Naive thymus-derived CD4-positive, alpha-beta T cell (primary cell): ENCODE measurements at regions of chr9 and their contacts with region 1.

Region 1: DNA sequence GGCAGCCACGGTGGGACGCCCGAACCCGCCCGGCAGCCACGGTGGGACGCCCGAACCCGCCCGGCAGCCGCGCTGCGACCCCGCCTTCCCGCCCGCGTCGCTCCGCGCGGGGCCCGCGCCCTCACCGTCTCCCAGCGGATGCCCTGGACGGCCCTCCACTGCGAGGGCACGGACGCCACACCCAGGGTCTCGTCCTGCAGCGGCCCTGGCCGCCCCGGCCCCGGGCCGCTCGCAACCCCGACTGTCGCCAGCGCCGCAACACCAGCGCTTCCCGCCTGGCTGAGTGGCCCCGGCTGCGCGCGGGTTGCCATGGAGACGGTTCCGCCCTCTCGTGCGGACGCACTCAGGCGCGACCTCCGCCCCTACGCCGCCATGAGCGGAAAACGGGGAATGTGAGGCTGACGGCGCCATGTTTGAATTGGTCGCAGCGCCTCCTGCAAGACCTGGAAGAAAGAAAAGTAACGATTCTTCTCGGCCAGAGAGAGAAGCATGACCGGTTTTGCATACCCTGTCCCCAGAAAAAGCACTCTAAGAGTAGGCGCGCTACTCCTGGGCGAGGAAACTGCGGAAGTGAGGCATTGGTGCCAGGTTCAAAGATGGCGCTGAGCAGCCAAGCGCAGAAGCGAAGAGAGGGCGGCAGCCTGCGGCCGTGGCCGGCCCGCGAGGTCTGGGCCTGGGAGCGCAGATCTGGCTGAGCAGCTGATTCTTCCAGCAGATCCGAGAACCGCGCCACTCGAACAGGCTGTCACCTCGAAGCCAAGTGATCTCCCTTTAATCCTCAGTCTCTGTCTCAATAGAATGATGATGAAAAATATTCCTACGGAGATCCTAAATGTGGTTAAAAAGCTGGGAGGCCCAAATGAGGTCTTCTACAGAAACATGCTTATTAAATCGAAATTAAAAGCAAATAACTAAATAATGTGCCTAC is at the start of gene DYNC2I2:
- DNase-seq: peak; percentile 91 to 96 (median 96)
- ATAC-seq: peak; percentile 98
- H3K4me3 ChIP-seq: peak within 1 kb of the TSS; percentile 96
- H3K4me3 Mint-ChIP-seq: peak within 1 kb of the TSS; percentile 88 to 98 (median 94)
- H3K27ac ChIP-seq: peak within 1 kb of the TSS; percentile 99
- H3K27ac Mint-ChIP-seq: peak within 1 kb of the TSS; percentile 95 to 100 (median 99)
- H3K4me1 ChIP-seq: peaks cover 3 to 9% of the 10 kb centered on the region in 2 donors
- H3K4me1 Mint-ChIP-seq: peaks cover 0 to 14% (median 7%) of the 10 kb centered on the region in 7 donors
- H3K27me3 ChIP-seq: no peaks in the 10 kb centered on the region
- H3K27me3 Mint-ChIP-seq: no peaks in the 10 kb centered on the region
- total RNA-seq, gene DYNC2I2: 2.5 to 41.7 (median 3.8) TPM

Region 2: DNA sequence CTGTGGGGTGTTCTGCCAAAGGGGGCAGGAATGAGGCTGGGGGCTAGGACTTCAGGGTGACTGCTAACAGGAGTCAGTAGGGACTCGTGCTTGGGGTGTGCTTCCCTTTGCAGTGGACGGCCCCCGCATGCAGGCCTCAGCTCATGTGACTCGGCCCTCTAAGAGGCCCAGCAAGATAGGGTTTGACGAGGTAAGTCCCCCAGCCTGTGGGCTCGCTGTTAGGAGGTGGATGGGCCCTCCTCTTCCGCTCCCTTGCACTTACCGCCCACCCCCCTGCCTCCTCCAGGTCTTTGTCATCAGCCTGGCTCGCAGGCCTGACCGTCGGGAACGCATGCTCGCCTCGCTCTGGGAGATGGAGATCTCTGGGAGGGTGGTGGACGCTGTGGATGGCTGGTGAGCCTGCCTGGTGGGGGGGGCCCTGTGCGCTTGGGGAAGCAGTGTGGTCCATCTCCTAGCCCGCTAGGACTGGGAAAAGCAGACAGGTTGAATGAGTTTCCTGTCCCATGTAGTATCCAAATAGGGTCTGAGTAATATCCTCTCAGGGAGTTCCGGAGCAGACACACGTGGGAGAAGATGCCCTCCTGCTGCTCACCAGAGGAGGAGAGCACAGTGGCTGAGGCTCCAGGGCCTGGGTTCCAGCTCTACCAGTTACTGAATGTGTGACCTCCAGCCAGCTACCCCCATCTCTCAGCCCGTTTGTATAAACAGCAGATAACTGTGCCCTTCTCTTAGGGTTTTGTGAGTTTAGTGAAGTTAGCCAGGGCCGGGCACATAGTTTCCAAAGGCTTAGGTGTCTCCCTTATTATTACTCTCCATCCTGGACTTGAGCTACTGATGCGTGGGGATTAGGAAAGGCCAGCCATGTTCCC is 227.8 kb before region 1 on chr9:
- CTCF ChIA-PET with region 1: no interaction called
- POLR2A ChIA-PET with region 1: no interaction called
- intact Hi-C with region 1: no loop called
- DNase-seq: no peak
- ATAC-seq: no peak
- H3K4me3 ChIP-seq: no peak overlapping the region
- H3K4me3 Mint-ChIP-seq: no peak overlapping the region
- H3K27ac ChIP-seq: no peak overlapping the region
- H3K27ac Mint-ChIP-seq: no peak overlapping the region
- H3K4me1 ChIP-seq: no peaks in the 10 kb centered on the region
- H3K4me1 Mint-ChIP-seq: no peaks in the 10 kb centered on the region
- H3K27me3 ChIP-seq: no peaks in the 10 kb centered on the region
- H3K27me3 Mint-ChIP-seq: no peaks in the 10 kb centered on the region

Region 3: GRCh38 chr9:128702445-128702948 is 45.8 kb after region 1 on chr9 and contains the start of gene PKN3:
- CTCF ChIA-PET with region 1: no interaction called
- POLR2A ChIA-PET with region 1: interaction called, 3 read pairs
- intact Hi-C with region 1: loop called (anchors 1 kb)
- DNase-seq: peak; percentile 63 to 95 (median 82)
- ATAC-seq: peak; percentile 94
- H3K4me3 ChIP-seq: peak within 1 kb of the TSS; percentile 68
- H3K4me3 Mint-ChIP-seq: peak within 1 kb of the TSS; percentile 84 to 94 (median 91)
- H3K27ac ChIP-seq: peak within 1 kb of the TSS; percentile 60
- H3K27ac Mint-ChIP-seq: peak within 1 kb of the TSS; percentile 52 to 91 (median 79)
- H3K4me1 ChIP-seq: no peaks in the 10 kb centered on the region
- H3K4me1 Mint-ChIP-seq: peaks cover 4 to 17% (median 10%) of the 10 kb centered on the region in 7 donors
- H3K27me3 ChIP-seq: no peaks in the 10 kb centered on the region
- H3K27me3 Mint-ChIP-seq: no peaks in the 10 kb centered on the region
- total RNA-seq, gene PKN3: 1.1 to 11.7 (median 1.6) TPM

Region 4: DNA sequence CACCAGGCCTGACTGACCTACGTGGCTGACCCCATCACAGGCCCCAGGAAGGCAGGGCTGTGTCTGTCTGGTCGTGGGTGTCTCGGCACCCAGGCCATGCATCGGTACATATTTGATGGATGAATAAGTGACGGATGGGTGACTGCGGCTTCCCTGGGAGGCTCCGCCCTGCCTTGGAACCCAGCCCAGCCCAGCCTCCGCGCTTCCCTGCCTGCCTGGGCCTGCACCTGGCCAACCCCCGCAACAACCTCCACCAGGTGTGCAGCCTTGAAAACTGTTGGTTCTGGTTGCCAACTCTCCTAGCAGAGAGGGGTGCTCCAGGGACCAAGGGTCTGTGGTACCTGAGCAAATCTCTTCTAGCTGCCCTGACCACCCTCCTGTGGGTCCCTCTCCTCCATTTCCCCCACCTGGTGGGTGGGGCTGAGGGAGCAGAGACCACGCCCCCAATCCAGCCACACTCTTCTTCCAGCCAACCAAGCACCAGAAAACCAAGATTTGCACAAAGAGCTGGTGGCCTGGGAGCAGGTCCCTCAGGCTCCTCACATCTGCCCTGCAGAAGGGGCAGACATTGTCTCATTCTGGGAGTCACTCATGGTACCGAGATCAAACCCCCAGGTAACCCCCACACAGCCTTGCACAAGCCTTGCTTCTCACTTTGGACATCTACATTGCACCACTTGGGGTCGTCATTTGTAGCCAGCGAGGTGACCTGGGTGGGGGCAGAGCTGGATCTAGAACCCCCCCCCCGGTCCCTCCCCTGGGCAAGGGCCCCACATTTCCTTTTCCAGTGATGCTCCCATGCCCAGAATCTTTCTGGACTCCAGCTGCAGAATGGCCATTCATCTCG is 621.9 kb after region 1 on chr9:
- CTCF ChIA-PET with region 1: no interaction called
- POLR2A ChIA-PET with region 1: no interaction called
- intact Hi-C with region 1: no loop called
- DNase-seq: peak in 1 of 9 donors; percentile 6
- ATAC-seq: no peak
- H3K4me3 ChIP-seq: no peak overlapping the region
- H3K4me3 Mint-ChIP-seq: no peak overlapping the region
- H3K27ac ChIP-seq: no peak overlapping the region
- H3K27ac Mint-ChIP-seq: no peak overlapping the region
- H3K4me1 ChIP-seq: no peaks in the 10 kb centered on the region
- H3K4me1 Mint-ChIP-seq: peaks cover 0 to 7% (median 0%) of the 10 kb centered on the region in 7 donors
- H3K27me3 ChIP-seq: peaks cover 0 to 2% of the 10 kb centered on the region in 2 donors
- H3K27me3 Mint-ChIP-seq: peaks cover 0 to 30% (median 0%) of the 10 kb centered on the region in 5 donors